Endothelial cell of umbilical vein (primary cell): ENCODE measurements at regions of chr5 and their contacts with region 1.

Region 1: DNA sequence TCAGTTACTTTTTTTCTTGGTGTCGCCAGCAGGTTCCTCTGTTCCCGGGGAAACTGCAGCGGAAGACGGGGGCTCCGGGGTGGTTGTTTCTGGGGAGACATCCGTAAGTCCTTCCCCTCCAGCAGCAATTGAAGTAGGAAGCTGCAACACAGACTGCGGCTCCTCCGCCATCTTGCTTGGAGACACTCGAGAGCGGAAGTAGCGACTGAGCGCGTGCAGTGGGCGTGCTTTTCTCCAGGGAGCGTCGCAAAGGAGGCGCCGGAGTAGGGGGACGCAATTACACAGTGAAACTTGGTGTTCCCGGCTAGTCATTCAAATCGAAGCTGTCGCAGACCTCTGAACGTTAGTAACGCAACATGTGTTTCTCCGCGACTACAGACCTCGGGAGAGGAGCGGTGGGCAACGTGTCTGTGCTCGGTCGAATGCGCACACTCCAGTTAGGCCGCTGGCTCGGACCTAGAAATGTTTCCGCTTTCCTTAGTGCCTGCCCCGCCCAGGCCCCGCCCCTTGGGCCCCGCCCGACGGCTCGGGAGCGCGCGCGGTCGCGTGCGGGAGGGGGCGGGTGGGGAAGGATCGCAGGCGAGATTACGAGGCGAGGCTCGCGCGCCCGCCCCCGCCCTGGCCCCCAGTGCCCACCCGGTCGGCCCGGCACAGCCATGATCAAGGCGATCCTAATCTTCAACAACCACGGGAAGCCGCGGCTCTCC is at the starts of genes AP3S1 and ATG12:
- DNase-seq: peak; percentile 95
- H3K4me3 ChIP-seq: peak within 1 kb of the TSS; percentile 66 to 90 (median 67)
- H3K27ac ChIP-seq: peak within 1 kb of the TSS; percentile 86
- H3K4me1 ChIP-seq: peaks cover 41% of the 10 kb centered on the region
- H3K27me3 ChIP-seq: no peaks in the 10 kb centered on the region
- CTCF ChIP-seq: no peak
- POLR2A ChIP-seq: peak; percentile 91
- total RNA-seq, gene AP3S1: 81.2 and 85.7 TPM in 2 replicates
- total RNA-seq, gene ATG12: 50.3 and 62.0 TPM in 2 replicates

Region 2: GRCh38 chr5:115098041-115098702 is 743.4 kb before region 1 on chr5:
- CTCF ChIA-PET with region 1: interaction called, 3 read pairs
- POLR2A ChIA-PET with region 1: no interaction called
- dilution Hi-C with region 1: no loop called
- intact Hi-C with region 1: loop called (anchors 5 kb)
- DNase-seq: peak; percentile 52
- H3K4me3 ChIP-seq: no peak overlapping the region
- H3K27ac ChIP-seq: no peak overlapping the region
- H3K4me1 ChIP-seq: no peaks in the 10 kb centered on the region
- H3K27me3 ChIP-seq: peaks cover 0 to 8% of the 10 kb centered on the region in 2 experiments
- CTCF ChIP-seq: peak; percentile 52 to 76
- POLR2A ChIP-seq: no peak

Region 3: GRCh38 chr5:115309751-115310370 is 531.7 kb before region 1 on chr5:
- CTCF ChIA-PET with region 1: interaction called, 5 read pairs
- POLR2A ChIA-PET with region 1: no interaction called
- dilution Hi-C with region 1: no loop called
- intact Hi-C with region 1: loop called (anchors 5 kb)
- DNase-seq: peak; percentile 69
- H3K4me3 ChIP-seq: no peak overlapping the region
- H3K27ac ChIP-seq: no peak overlapping the region
- H3K4me1 ChIP-seq: no peaks in the 10 kb centered on the region
- H3K27me3 ChIP-seq: no peaks in the 10 kb centered on the region
- CTCF ChIP-seq: peak in 1 of 2 donors; percentile 16
- POLR2A ChIP-seq: no peak

Region 4: GRCh38 chr5:115579747-115580173 is 261.8 kb before region 1 on chr5:
- CTCF ChIA-PET with region 1: no interaction called
- POLR2A ChIA-PET with region 1: no interaction called
- dilution Hi-C with region 1: no loop called
- intact Hi-C with region 1: no loop called
- DNase-seq: no peak
- H3K4me3 ChIP-seq: no peak overlapping the region
- H3K27ac ChIP-seq: no peak overlapping the region
- H3K4me1 ChIP-seq: peaks cover 21% of the 10 kb centered on the region
- H3K27me3 ChIP-seq: no peaks in the 10 kb centered on the region
- CTCF ChIP-seq: no peak
- POLR2A ChIP-seq: no peak

Region 5: GRCh38 chr5:115749016-115749415 is 92.5 kb before region 1 on chr5:
- CTCF ChIA-PET with region 1: no interaction called
- POLR2A ChIA-PET with region 1: no interaction called
- dilution Hi-C with region 1: no loop called
- intact Hi-C with region 1: no loop called
- DNase-seq: no peak
- H3K4me3 ChIP-seq: no peak overlapping the region
- H3K27ac ChIP-seq: no peak overlapping the region
- H3K4me1 ChIP-seq: no peaks in the 10 kb centered on the region
- H3K27me3 ChIP-seq: peaks cover 6 to 12% of the 10 kb centered on the region in 2 experiments
- CTCF ChIP-seq: no peak
- POLR2A ChIP-seq: no peak

Region 6: DNA sequence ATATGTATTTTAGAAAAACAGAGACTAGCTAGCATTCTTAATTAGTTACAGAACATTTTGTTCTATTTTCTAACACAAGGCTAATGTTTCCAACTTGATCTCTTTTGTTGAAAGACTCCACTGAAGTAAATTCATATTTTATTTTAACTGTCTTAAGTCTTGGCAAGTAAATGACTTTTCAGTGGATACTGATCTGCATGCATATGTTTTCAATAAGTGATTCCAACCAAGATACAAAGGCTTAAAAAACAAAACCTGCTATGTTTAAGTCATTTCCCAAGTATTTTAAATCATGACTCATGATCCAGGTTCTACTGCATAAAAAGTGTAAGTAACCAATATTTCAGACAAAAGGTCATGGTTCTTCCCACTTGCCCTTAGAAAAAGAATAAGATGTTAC is 30.8 kb before region 1 on chr5:
- CTCF ChIA-PET with region 1: interaction called, 4 read pairs
- POLR2A ChIA-PET with region 1: no interaction called
- dilution Hi-C with region 1: no loop called
- intact Hi-C with region 1: loop called (anchors 1 kb)
- DNase-seq: peak; percentile 20
- H3K4me3 ChIP-seq: no peak overlapping the region
- H3K27ac ChIP-seq: no peak overlapping the region
- H3K4me1 ChIP-seq: peaks cover 22% of the 10 kb centered on the region
- H3K27me3 ChIP-seq: peaks cover 18 to 21% of the 10 kb centered on the region in 2 experiments
- CTCF ChIP-seq: no peak
- POLR2A ChIP-seq: no peak

Region 7: GRCh38 chr5:115888027-115888426 is 46.5 kb after region 1 on chr5:
- CTCF ChIA-PET with region 1: interaction called, 15 read pairs
- POLR2A ChIA-PET with region 1: no interaction called
- dilution Hi-C with region 1: no loop called
- intact Hi-C with region 1: no loop called
- DNase-seq: peak; percentile 56
- H3K4me3 ChIP-seq: no peak overlapping the region
- H3K27ac ChIP-seq: no peak overlapping the region
- H3K4me1 ChIP-seq: no peaks in the 10 kb centered on the region
- H3K27me3 ChIP-seq: no peaks in the 10 kb centered on the region
- CTCF ChIP-seq: no peak
- POLR2A ChIP-seq: no peak

Region 8: DNA sequence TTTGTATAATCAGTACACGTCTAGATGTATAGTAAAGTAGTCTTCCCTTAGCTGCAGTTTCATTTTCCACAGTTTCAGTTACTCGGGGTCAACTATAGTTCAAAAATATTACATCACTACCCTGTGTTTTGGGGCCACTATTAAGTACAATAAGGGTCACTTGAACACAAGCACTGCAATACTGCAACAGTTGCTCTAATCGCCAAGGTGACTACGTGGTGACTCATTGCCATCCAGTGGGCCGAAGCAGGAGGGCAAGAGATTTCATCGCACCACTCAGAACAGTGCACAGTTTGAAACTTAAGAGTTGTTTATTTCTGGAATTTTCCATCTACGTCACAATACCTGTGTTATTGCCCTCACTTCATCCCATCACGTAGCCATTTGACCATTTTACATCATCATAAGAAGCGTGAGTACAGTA is 190.6 kb after region 1 on chr5 and contains the start of gene ARL14EPL:
- CTCF ChIA-PET with region 1: interaction called, 7 read pairs
- POLR2A ChIA-PET with region 1: no interaction called
- dilution Hi-C with region 1: no loop called
- intact Hi-C with region 1: loop called (anchors 1 kb)
- DNase-seq: peak; percentile 98
- H3K4me3 ChIP-seq: peak within 1 kb of the TSS in 1 of 3 experiments; percentile 33
- H3K27ac ChIP-seq: peak within 1 kb of the TSS; percentile 45
- H3K4me1 ChIP-seq: peaks cover 14% of the 10 kb centered on the region
- H3K27me3 ChIP-seq: no peaks in the 10 kb centered on the region
- CTCF ChIP-seq: peak; percentile 34 to 49
- POLR2A ChIP-seq: no peak
- total RNA-seq, gene ARL14EPL: 0.58 TPM in 1 of 2 replicates, not detected in the other